CD4-positive, alpha-beta memory T cell (primary cell): ENCODE measurements at regions of chr9 and their contacts with region 1.

Region 1: GRCh38 chr9:124771021-124771866 is at the start of gene NR6A1:
- DNase-seq: peak; percentile 92 to 95 (median 94)
- H3K4me3 ChIP-seq: peak within 1 kb of the TSS; percentile 50 to 66
- H3K4me3 Mint-ChIP-seq: peak within 1 kb of the TSS; percentile 89 to 98 (median 91)
- H3K27ac ChIP-seq: peak within 1 kb of the TSS; percentile 35
- H3K27ac Mint-ChIP-seq: peak within 1 kb of the TSS; percentile 89 to 95 (median 95)
- H3K4me1 ChIP-seq: peaks cover 24% of the 10 kb centered on the region
- H3K4me1 Mint-ChIP-seq: peaks cover 20 to 53% (median 34%) of the 10 kb centered on the region in 4 donors
- H3K27me3 ChIP-seq: peaks cover 36% of the 10 kb centered on the region
- H3K27me3 Mint-ChIP-seq: peaks cover 49 to 54% of the 10 kb centered on the region in 2 donors
- total RNA-seq, gene NR6A1: 0.06 TPM in 1 of 2 experiments, not detected in the other

Region 2: GRCh38 chr9:124861342-124862229 is 90.3 kb after region 1 on chr9 and contains the starts of genes ARPC5L and RPL35:
- CTCF ChIA-PET with region 1: interaction called, 230 read pairs
- POLR2A ChIA-PET with region 1: interaction called, 22 read pairs
- intact Hi-C with region 1: loop called (anchors 1 kb)
- DNase-seq: peak; percentile 95 to 96 (median 95)
- H3K4me3 ChIP-seq: peak within 1 kb of the TSS; percentile 78 to 84
- H3K4me3 Mint-ChIP-seq: peak within 1 kb of the TSS; percentile 91 to 100 (median 96)
- H3K27ac ChIP-seq: peak within 1 kb of the TSS; percentile 95
- H3K27ac Mint-ChIP-seq: peak within 1 kb of the TSS; percentile 92 to 99 (median 98)
- H3K4me1 ChIP-seq: peaks cover 26% of the 10 kb centered on the region
- H3K4me1 Mint-ChIP-seq: peaks cover 20 to 41% (median 29%) of the 10 kb centered on the region in 4 donors
- H3K27me3 ChIP-seq: no peaks in the 10 kb centered on the region
- H3K27me3 Mint-ChIP-seq: no peaks in the 10 kb centered on the region
- total RNA-seq, gene ARPC5L: 26.8 to 31.4 TPM
- total RNA-seq, gene RPL35: 1,702 to 1,766 TPM

Region 3: GRCh38 chr9:124894741-124895170 is 123.5 kb after region 1 on chr9:
- CTCF ChIA-PET with region 1: interaction called, 6 read pairs
- POLR2A ChIA-PET with region 1: no interaction called
- intact Hi-C with region 1: loop called (anchors 1 kb)
- DNase-seq: peak; percentile 51 to 61 (median 58)
- H3K4me3 ChIP-seq: no peak overlapping the region
- H3K4me3 Mint-ChIP-seq: peak overlapping the region in 3 of 8 donors; percentile 12 to 69 (median 25)
- H3K27ac ChIP-seq: no peak overlapping the region
- H3K27ac Mint-ChIP-seq: peak overlapping the region; percentile 40 to 90 (median 72)
- H3K4me1 ChIP-seq: no peaks in the 10 kb centered on the region
- H3K4me1 Mint-ChIP-seq: peaks cover 7 to 16% (median 13%) of the 10 kb centered on the region in 4 donors
- H3K27me3 ChIP-seq: no peaks in the 10 kb centered on the region
- H3K27me3 Mint-ChIP-seq: no peaks in the 10 kb centered on the region

Region 4: DNA sequence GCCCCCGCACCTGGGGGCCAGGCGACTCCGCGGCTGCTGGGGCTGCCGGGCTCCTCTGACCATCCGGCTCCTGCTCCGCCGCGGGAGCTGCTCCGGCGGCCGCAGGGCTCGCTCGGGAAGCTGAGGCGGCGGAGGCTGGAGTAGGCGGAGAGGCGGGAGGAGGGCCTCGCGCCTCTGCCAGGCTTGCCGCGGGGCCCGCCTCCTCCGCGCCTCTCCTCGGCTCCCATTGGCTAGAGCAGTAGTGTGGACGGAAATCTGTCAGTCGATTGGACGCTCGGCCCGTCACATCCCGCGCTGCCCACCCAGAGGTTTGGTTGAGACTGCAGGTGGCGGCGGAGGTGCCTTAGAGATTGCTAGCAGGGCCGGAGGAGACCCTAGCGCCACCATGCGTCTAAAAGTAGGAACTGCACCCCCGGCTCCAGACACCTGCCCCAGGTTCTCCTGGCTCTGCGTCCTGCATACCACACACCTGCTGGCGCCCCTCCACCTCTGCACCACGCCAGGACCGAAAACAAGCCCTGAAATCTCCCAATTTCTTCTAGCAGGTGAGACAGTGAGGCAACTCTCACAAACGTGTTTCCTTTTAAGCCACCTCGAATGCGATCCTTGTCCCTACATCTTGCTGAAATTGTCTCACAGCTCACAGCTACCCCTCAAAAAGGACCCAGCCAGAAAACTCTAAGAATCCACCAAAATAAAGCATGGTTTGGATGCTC is 372.3 kb after region 1 on chr9 and contains the start of gene SCAI:
- CTCF ChIA-PET with region 1: interaction called, 4 read pairs
- POLR2A ChIA-PET with region 1: interaction called, 4 read pairs
- intact Hi-C with region 1: loop called (anchors 1 kb)
- DNase-seq: peak; percentile 97 to 99 (median 99)
- H3K4me3 ChIP-seq: peak within 1 kb of the TSS in 1 of 2 donors; percentile 49
- H3K4me3 Mint-ChIP-seq: peak within 1 kb of the TSS; percentile 93 to 99 (median 98)
- H3K27ac ChIP-seq: peak within 1 kb of the TSS; percentile 16
- H3K27ac Mint-ChIP-seq: peak within 1 kb of the TSS; percentile 85 to 95 (median 91)
- H3K4me1 ChIP-seq: peaks cover 22% of the 10 kb centered on the region
- H3K4me1 Mint-ChIP-seq: peaks cover 17 to 34% (median 26%) of the 10 kb centered on the region in 4 donors
- H3K27me3 ChIP-seq: no peaks in the 10 kb centered on the region
- H3K27me3 Mint-ChIP-seq: no peaks in the 10 kb centered on the region
- total RNA-seq, gene SCAI: 14.7 to 15.5 TPM

Region 5: DNA sequence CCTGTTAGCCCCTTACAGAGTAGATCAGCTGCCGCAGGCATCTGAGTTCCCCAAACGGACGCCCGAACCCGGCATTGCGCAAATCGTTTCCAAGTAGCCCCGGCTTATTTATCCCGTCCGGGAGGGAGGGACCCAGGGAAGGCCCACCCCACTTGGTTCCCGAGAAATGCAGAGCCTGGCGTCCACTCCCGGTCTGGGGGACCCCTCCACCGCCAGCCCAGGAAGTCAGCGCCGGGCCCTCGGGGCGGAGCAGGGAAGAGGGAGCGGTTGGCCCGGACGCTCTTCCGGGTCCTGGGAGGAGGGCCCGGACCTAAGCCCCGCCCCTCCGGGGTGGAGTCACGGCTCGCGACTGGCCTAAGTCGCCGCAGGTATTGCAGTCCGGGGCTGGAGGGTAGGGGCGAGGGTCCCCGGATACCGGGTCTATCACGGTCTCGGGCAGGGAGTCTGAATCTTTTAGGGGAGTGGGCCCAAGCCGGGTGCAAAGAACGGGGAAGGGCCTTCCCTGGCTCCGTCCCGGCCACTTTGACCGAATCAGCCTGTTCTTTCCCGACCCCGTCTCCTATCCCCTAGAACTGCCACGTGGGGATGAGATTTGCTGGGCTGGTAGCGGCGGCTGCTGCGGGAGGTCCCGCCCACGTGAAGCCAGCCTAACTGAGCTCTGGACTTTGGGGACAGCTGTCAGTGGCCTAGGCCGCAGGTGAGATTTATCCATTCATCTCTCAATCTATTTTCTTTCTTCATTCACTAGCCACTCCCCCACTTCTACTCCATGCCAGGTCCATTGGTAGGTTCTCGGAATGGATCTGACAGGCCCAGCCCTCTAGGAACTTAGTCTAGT is 429.2 kb after region 1 on chr9 and contains the start of gene RABEPK:
- CTCF ChIA-PET with region 1: no interaction called
- POLR2A ChIA-PET with region 1: no interaction called
- intact Hi-C with region 1: loop called (anchors 5 kb)
- DNase-seq: peak; percentile 83 to 88 (median 86)
- H3K4me3 ChIP-seq: peak within 1 kb of the TSS; percentile 81 to 90
- H3K4me3 Mint-ChIP-seq: peak within 1 kb of the TSS; percentile 91 to 98 (median 93)
- H3K27ac ChIP-seq: peak within 1 kb of the TSS; percentile 80
- H3K27ac Mint-ChIP-seq: peak within 1 kb of the TSS; percentile 92 to 96 (median 94)
- H3K4me1 ChIP-seq: peaks cover 41% of the 10 kb centered on the region
- H3K4me1 Mint-ChIP-seq: peaks cover 29 to 50% (median 35%) of the 10 kb centered on the region in 4 donors
- H3K27me3 ChIP-seq: no peaks in the 10 kb centered on the region
- H3K27me3 Mint-ChIP-seq: no peaks in the 10 kb centered on the region
- total RNA-seq, gene RABEPK: 12.2 to 13.5 TPM

Region 6: DNA sequence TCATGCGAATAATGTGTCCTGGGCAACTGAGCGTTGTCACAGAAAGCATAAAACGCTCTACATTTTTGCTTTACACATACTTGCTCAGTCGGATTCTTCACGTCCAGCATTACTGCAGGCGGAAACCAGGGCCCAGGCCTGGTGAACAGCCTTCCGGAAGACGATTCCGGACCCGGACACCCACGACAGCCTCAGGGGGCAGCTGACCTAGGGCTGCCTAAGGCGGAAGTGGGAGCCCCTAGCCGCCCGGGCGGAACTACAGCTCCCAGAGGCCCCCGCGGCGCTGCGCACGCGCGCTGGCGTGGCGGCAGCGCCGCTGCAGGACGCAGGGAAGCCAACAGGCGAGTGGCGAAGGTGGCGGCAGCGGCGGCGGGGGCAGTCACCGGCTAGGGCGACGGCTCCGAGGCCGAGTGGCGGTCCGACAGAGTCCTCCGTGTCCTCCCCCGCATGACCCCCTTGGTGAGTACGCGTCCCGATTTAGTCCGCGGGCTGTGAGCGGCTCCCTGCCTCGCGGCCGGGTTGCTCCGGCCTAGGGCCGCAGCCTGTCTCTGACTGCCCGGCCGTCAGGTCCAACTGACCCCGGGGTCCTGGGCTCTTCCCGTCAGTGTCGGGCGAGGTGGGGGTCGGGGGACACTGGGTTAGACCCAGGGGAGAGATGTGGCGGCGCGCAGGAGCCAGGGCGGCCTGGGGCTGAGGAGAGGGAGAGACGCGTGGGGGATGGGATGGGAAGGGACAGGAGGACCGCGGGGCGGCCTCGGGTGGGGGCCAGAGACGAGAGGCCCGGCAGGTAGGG is 490.5 kb after region 1 on chr9 and contains the start of gene GAPVD1:
- CTCF ChIA-PET with region 1: no interaction called
- POLR2A ChIA-PET with region 1: no interaction called
- intact Hi-C with region 1: loop called (anchors 5 kb)
- DNase-seq: peak; percentile 86 to 91 (median 87)
- H3K4me3 ChIP-seq: peak within 1 kb of the TSS; percentile 72 to 94
- H3K4me3 Mint-ChIP-seq: peak within 1 kb of the TSS; percentile 94 to 98 (median 97)
- H3K27ac ChIP-seq: peak within 1 kb of the TSS; percentile 81
- H3K27ac Mint-ChIP-seq: peak within 1 kb of the TSS; percentile 87 to 98 (median 97)
- H3K4me1 ChIP-seq: peaks cover 33% of the 10 kb centered on the region
- H3K4me1 Mint-ChIP-seq: peaks cover 28 to 53% (median 40%) of the 10 kb centered on the region in 4 donors
- H3K27me3 ChIP-seq: no peaks in the 10 kb centered on the region
- H3K27me3 Mint-ChIP-seq: no peaks in the 10 kb centered on the region
- total RNA-seq, gene GAPVD1: 67.8 to 76.4 TPM